ENCODE measurements at regions of chr3 and their contacts with region 1.

Region 1: GRCh38 chr3:149771652-149772271 is 19.5 kb upstream of the COMMD2 start:
- DNase-seq: peak; percentile 44
- H3K4me3 ChIP-seq: no peak overlapping the region
- H3K27ac ChIP-seq: no peak overlapping the region
- H3K4me1 ChIP-seq: no peaks in the 10 kb centered on the region
- H3K27me3 ChIP-seq: no peaks in the 10 kb centered on the region
- CTCF ChIP-seq: peak; percentile 40 to 66 (median 54)
- POLR2A ChIP-seq: no peak

Region 2: GRCh38 chr3:149366941-149367840 is 404.6 kb before region 1 on chr3:
- intact Hi-C with region 1: no loop called
- DNase-seq: no peak
- H3K4me3 ChIP-seq: no peak overlapping the region
- H3K27ac ChIP-seq: peak overlapping the region in 1 of 2 donors; percentile 16
- H3K4me1 ChIP-seq: peaks cover 20% of the 10 kb centered on the region
- H3K27me3 ChIP-seq: no peaks in the 10 kb centered on the region
- CTCF ChIP-seq: no peak
- POLR2A ChIP-seq: no peak

Region 3: GRCh38 chr3:149494022-149494758 is 277.6 kb before region 1 on chr3:
- intact Hi-C with region 1: loop called (anchors 10 kb)
- DNase-seq: peak; percentile 38
- H3K4me3 ChIP-seq: no peak overlapping the region
- H3K27ac ChIP-seq: no peak overlapping the region
- H3K4me1 ChIP-seq: no peaks in the 10 kb centered on the region
- H3K27me3 ChIP-seq: no peaks in the 10 kb centered on the region
- CTCF ChIP-seq: peak; percentile 25 to 77 (median 64)
- POLR2A ChIP-seq: no peak

Region 4: DNA sequence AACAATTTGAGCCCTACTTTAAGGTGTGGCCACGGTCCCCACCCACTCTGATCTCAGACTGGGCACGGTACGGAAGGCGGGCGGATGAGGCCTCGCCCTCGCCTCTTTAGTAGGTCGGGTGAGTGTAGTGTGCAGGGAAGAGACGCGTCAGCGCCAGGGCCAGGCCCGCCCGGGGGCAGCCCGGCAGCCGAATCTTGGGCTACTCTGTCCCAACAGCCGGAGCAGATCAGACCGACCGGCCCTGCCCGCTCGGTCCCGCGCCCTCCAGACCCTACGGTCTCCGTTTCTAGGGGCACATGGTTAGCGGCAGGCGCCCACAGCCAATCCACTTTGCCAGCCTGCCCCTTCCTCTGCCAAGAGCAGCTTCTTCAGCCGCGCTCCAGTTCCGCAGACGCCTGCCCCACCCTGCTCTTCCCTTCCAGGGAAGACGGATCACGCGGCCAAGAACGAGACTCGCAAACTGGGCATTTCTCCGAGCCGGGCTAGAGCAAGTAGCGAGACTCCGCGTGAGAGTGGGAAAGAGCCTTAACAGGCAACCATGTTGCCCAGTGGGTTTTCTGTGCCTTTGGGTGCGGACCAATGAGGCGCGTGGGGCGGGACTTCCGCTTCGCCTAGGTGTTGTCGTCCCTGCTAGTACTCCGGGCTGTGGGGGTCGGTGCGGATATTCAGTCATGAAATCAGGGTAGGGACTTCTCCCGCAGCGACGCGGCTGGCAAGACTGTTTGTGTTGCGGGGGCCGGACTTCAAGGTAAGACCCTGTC is 41.0 kb after region 1 on chr3 and contains the start of gene RNF13:
- intact Hi-C with region 1: loop called (anchors 5 kb)
- DNase-seq: peak; percentile 98
- H3K4me3 ChIP-seq: peak within 1 kb of the TSS; percentile 62 to 82
- H3K27ac ChIP-seq: peak within 1 kb of the TSS; percentile 96 to 97
- H3K4me1 ChIP-seq: no peaks in the 10 kb centered on the region
- H3K27me3 ChIP-seq: no peaks in the 10 kb centered on the region
- CTCF ChIP-seq: no peak
- POLR2A ChIP-seq: peak; percentile 66
- total RNA-seq, gene RNF13: 77.3 to 105 TPM